Naive thymus-derived CD4-positive, alpha-beta T cell (primary cell): ENCODE measurements at regions of chr5 and their contacts with region 1.

Region 1: GRCh38 chr5:67165526-67166459 is 30.8 kb downstream of the CD180 start:
- DNase-seq: peak; percentile 56 to 78 (median 70)
- ATAC-seq: peak; percentile 88
- H3K4me3 ChIP-seq: peak overlapping the region; percentile 54
- H3K4me3 Mint-ChIP-seq: peak overlapping the region; percentile 84 to 96 (median 88)
- H3K27ac ChIP-seq: peak overlapping the region; percentile 80
- H3K27ac Mint-ChIP-seq: peak overlapping the region in 8 of 9 donors; percentile 96 to 100 (median 98)
- H3K4me1 ChIP-seq: peaks cover 71 to 73% of the 10 kb centered on the region in 2 donors
- H3K4me1 Mint-ChIP-seq: peaks cover 36 to 83% (median 62%) of the 10 kb centered on the region in 7 donors
- H3K27me3 ChIP-seq: no peaks in the 10 kb centered on the region
- H3K27me3 Mint-ChIP-seq: no peaks in the 10 kb centered on the region

Region 2: DNA sequence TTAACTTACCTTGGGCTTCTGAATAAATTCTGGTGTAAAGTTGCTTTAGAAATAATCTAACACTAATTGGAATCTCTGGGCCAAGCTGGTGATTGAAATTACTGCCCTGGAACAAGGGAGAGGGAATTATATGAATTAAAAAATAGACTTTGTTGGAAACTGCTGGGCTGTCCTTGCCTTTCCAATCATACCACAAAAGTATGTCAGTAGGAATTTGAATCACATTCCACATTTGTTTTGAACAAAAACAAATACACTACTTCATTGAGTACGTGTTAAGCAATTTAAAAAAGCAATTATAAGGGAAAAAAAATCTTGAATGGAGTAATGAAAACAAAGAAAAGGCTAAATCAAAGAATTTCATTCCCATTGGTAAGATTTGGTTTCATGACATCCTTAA is 1124.2 kb before region 1 on chr5:
- CTCF ChIA-PET with region 1: no interaction called
- POLR2A ChIA-PET with region 1: no interaction called
- intact Hi-C with region 1: no loop called
- DNase-seq: no peak
- ATAC-seq: no peak
- H3K4me3 ChIP-seq: no peak overlapping the region
- H3K4me3 Mint-ChIP-seq: no peak overlapping the region
- H3K27ac ChIP-seq: no peak overlapping the region
- H3K27ac Mint-ChIP-seq: peak overlapping the region in 3 of 9 donors; percentile 44 to 59 (median 57)
- H3K4me1 ChIP-seq: no peaks in the 10 kb centered on the region
- H3K4me1 Mint-ChIP-seq: peaks cover 0 to 35% (median 29%) of the 10 kb centered on the region in 7 donors
- H3K27me3 ChIP-seq: no peaks in the 10 kb centered on the region
- H3K27me3 Mint-ChIP-seq: no peaks in the 10 kb centered on the region

Region 3: DNA sequence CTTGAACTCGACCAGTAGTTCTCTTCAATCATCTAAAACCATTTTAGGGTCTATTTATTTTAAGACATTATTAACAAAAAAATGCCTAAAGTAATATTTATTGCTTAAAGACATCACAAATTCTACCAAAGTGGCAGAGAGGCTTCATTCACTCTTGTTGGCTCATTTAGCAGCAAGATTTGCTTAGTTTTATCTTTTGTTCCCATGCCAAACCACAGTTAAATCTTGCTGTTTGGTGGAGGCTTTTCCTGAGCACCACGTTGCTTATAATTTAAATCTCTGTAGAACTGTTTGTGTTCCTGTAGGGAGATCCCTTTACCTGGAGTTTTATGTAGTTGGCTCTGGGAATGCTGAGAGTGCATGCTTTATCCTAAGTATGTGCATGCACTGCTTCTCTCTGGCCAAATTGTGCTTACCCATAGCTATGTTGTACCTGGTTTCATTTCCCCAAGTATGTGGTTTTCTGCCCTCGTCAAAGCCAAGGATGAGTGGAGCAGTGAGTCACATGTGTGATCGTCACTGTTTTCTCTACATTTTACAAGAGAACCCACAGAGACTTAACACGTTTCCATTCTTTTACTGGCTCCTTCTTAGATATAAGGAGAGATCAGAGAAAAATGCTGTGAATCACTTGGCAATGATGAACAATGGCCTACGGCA is 611.7 kb before region 1 on chr5:
- CTCF ChIA-PET with region 1: no interaction called
- POLR2A ChIA-PET with region 1: no interaction called
- intact Hi-C with region 1: loop called in 1 of 2 experiments (anchors 5 kb)
- DNase-seq: peak in 1 of 9 donors; percentile 31
- ATAC-seq: peak; percentile 83
- H3K4me3 ChIP-seq: no peak overlapping the region
- H3K4me3 Mint-ChIP-seq: peak overlapping the region in 2 of 10 donors; percentile 22 to 56
- H3K27ac ChIP-seq: no peak overlapping the region
- H3K27ac Mint-ChIP-seq: peak overlapping the region in 1 of 9 donors; percentile 71
- H3K4me1 ChIP-seq: peaks cover 0 to 5% of the 10 kb centered on the region in 2 donors
- H3K4me1 Mint-ChIP-seq: peaks cover 0 to 27% (median 0%) of the 10 kb centered on the region in 7 donors
- H3K27me3 ChIP-seq: peaks cover 0 to 3% of the 10 kb centered on the region in 2 donors
- H3K27me3 Mint-ChIP-seq: peaks cover 0 to 14% (median 4%) of the 10 kb centered on the region in 5 donors

Region 4: DNA sequence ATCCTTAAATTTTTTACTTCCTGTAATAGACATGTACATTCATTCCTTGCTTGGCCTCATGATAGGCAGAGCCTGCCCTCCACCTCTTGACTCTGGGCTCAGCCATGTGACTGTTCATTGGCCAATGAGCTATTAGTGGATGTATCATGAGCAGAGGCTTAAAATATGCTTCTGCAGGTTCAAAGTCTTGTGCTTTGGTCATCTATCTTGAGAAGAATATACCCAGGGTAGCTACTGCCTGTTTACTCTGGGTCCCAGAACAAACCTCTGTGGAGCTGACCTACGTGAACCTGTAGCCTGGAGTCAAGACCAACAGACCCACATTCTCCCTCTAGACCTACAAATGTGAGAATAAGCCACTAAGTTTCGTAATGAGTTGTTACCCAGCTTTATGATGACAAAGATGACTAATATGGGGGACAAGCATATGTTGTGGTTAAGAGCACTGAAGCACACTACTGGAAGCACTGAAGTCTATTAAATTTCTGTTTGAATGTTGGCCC is 325.2 kb before region 1 on chr5:
- CTCF ChIA-PET with region 1: no interaction called
- POLR2A ChIA-PET with region 1: no interaction called
- intact Hi-C with region 1: loop called in 1 of 2 experiments (anchors 5 kb)
- DNase-seq: peak in 1 of 9 donors; percentile 39
- ATAC-seq: peak; percentile 73
- H3K4me3 ChIP-seq: no peak overlapping the region
- H3K4me3 Mint-ChIP-seq: peak overlapping the region in 1 of 10 donors; percentile 71
- H3K27ac ChIP-seq: no peak overlapping the region
- H3K27ac Mint-ChIP-seq: peak overlapping the region in 1 of 9 donors; percentile 93
- H3K4me1 ChIP-seq: no peaks in the 10 kb centered on the region
- H3K4me1 Mint-ChIP-seq: peaks cover 0 to 71% (median 0%) of the 10 kb centered on the region in 7 donors
- H3K27me3 ChIP-seq: no peaks in the 10 kb centered on the region
- H3K27me3 Mint-ChIP-seq: peaks cover 0 to 13% (median 7%) of the 10 kb centered on the region in 5 donors

Region 5: GRCh38 chr5:66864331-66864840 is 301.4 kb before region 1 on chr5:
- CTCF ChIA-PET with region 1: no interaction called
- POLR2A ChIA-PET with region 1: no interaction called
- intact Hi-C with region 1: no loop called
- DNase-seq: peak in 1 of 9 donors; percentile 12
- ATAC-seq: peak; percentile 32
- H3K4me3 ChIP-seq: no peak overlapping the region
- H3K4me3 Mint-ChIP-seq: no peak overlapping the region
- H3K27ac ChIP-seq: no peak overlapping the region
- H3K27ac Mint-ChIP-seq: peak overlapping the region in 1 of 9 donors; percentile 1
- H3K4me1 ChIP-seq: no peaks in the 10 kb centered on the region
- H3K4me1 Mint-ChIP-seq: peaks cover 0 to 50% (median 0%) of the 10 kb centered on the region in 7 donors
- H3K27me3 ChIP-seq: no peaks in the 10 kb centered on the region
- H3K27me3 Mint-ChIP-seq: peaks cover 4 to 48% (median 26%) of the 10 kb centered on the region in 5 donors

Region 6: DNA sequence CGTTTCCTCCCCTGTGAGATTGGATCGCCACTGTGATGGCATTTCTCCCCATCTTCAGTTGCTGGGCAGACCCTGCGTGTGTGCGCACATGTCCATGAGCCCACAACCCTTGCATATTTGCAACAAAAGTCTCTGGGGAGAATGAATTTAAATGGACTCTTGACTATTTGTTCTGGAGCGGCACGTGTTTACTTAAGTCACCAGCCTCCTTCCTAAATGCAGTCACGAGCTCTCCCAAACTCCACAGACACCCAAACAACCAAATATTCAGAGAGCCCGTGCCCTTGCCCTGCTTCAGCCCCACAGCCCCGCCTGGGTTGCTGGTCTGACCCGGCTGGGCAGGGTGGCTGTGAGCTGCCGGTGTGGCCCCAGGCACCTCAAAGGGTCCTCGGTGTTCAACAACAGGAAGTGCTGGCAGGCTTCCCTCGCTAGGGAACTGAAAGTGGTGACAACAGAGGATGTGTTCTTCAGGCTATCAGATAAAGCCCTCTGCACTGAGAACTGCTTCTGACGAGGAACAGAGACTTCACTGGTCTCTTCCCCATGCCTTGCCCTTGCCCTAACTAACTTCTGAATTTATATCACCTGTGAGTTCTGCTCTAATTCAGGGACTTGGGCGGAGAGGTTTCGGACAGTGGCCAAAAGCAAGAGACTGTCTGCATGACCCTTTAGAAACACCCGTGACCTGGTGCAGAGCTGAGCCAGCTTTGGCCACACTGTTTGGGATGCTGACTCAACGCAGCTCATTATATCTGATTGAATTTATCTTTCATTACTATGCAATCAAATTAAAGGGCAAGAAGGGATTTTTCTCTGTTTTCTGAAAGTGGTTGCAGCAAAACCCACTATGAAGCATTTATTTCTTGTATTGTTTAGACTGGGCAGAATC is 50.0 kb after region 1 on chr5:
- CTCF ChIA-PET with region 1: interaction called, 370 read pairs
- POLR2A ChIA-PET with region 1: interaction called, 348 read pairs
- intact Hi-C with region 1: no loop called
- DNase-seq: peak; percentile 52 to 85 (median 76)
- ATAC-seq: peak; percentile 98
- H3K4me3 ChIP-seq: peak overlapping the region; percentile 6
- H3K4me3 Mint-ChIP-seq: peak overlapping the region; percentile 32 to 95 (median 77)
- H3K27ac ChIP-seq: peak overlapping the region; percentile 74
- H3K27ac Mint-ChIP-seq: peak overlapping the region; percentile 95 to 100 (median 99)
- H3K4me1 ChIP-seq: peaks cover 42 to 45% of the 10 kb centered on the region in 2 donors
- H3K4me1 Mint-ChIP-seq: peaks cover 37 to 74% (median 66%) of the 10 kb centered on the region in 7 donors
- H3K27me3 ChIP-seq: no peaks in the 10 kb centered on the region
- H3K27me3 Mint-ChIP-seq: no peaks in the 10 kb centered on the region

Region 7: DNA sequence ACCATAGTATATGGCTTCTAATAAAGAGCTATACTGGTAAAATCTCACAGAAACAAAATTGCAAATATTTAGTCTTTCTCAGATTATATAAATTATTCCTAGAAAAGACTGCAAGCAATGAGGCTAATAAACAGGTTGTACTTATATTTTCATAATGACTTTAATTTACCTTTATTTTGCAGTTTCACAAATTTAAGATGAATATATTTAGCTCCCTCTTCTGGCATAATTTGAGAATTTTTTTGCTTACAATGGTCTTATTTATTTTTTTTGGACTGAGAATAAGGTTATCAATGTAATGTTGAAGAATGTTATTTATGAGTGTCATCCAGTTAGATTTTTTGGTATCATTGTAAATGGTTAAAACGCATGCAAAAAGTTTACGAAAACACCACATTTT is 1106.5 kb after region 1 on chr5:
- CTCF ChIA-PET with region 1: no interaction called
- POLR2A ChIA-PET with region 1: no interaction called
- intact Hi-C with region 1: loop called (anchors 2 to 5 kb)
- DNase-seq: peak in 3 of 9 donors; percentile 32 to 45 (median 37)
- ATAC-seq: no peak
- H3K4me3 ChIP-seq: no peak overlapping the region
- H3K4me3 Mint-ChIP-seq: peak overlapping the region in 2 of 10 donors; percentile 13 to 17
- H3K27ac ChIP-seq: no peak overlapping the region
- H3K27ac Mint-ChIP-seq: peak overlapping the region in 8 of 9 donors; percentile 4 to 95 (median 58)
- H3K4me1 ChIP-seq: peaks cover 68 to 80% of the 10 kb centered on the region in 2 donors
- H3K4me1 Mint-ChIP-seq: peaks cover 33 to 92% (median 80%) of the 10 kb centered on the region in 7 donors
- H3K27me3 ChIP-seq: no peaks in the 10 kb centered on the region
- H3K27me3 Mint-ChIP-seq: no peaks in the 10 kb centered on the region

Region 8: GRCh38 chr5:68711293-68712200 is 1545.8 kb after region 1 on chr5:
- CTCF ChIA-PET with region 1: no interaction called
- POLR2A ChIA-PET with region 1: no interaction called
- intact Hi-C with region 1: loop called in 1 of 2 experiments (anchors 2 kb)
- DNase-seq: peak in 7 of 9 donors; percentile 31 to 78 (median 70)
- ATAC-seq: peak; percentile 89
- H3K4me3 ChIP-seq: peak overlapping the region; percentile 37
- H3K4me3 Mint-ChIP-seq: peak overlapping the region; percentile 6 to 85 (median 72)
- H3K27ac ChIP-seq: peak overlapping the region; percentile 34
- H3K27ac Mint-ChIP-seq: peak overlapping the region; percentile 33 to 92 (median 83)
- H3K4me1 ChIP-seq: peaks cover 21 to 29% of the 10 kb centered on the region in 2 donors
- H3K4me1 Mint-ChIP-seq: peaks cover 12 to 47% (median 28%) of the 10 kb centered on the region in 7 donors
- H3K27me3 ChIP-seq: no peaks in the 10 kb centered on the region
- H3K27me3 Mint-ChIP-seq: peaks cover 0 to 6% (median 0%) of the 10 kb centered on the region in 5 donors